Activated B cell treated with CpG ODN at 0.5 μM for 24 hours (primary cell): ENCODE measurements at regions of chr3 and their contacts with region 1.

Region 1: DNA sequence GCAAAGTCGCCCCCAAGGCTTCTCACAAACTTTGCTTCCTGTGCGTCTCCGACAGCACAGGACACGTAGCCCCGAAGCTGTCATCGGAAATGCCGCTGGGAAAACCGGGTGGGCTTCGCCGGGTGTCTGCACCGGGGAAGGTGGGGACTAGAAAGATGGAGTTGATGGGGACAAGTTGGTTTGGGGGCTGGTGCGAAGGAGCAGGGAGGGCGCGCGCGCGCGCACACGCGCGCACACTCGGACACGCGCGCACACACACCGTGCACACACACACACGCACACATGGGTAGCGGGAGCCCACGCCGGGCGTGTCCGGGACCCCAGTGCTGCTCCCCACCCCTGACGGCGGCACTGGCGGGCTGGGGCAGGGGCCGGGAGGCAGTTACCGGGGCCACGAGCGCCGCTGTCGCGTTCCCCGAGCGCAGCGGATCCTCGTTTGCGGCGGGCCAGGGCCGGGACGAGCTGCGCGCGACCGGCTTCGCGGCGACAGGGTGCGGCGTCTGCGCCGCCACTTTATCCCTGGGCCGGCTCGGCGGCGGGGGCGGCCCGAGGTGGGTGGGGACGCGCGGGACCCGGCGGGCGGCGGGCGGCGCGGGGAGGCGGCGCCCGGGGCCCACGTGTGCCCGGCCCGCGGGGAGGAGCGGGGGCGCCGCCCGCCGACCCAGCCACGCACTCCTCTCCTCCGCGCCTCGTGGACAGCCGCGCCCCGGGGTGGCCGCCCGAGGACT is 547 bp upstream of the MGLL start:
- DNase-seq: peak; percentile 39
- ATAC-seq: peak; percentile 72
- H3K4me3 Mint-ChIP-seq: peak overlapping the region; percentile 93
- H3K27ac Mint-ChIP-seq: peak overlapping the region; percentile 74
- H3K4me1 Mint-ChIP-seq: peaks cover 29% of the 10 kb centered on the region
- H3K27me3 Mint-ChIP-seq: peaks cover 14% of the 10 kb centered on the region
- CTCF ChIP-seq: no peak

Region 2: GRCh38 chr3:127735767-127736704 is 86.8 kb before region 1 on chr3:
- CTCF ChIA-PET with region 1: interaction called, 4 read pairs
- POLR2A ChIA-PET with region 1: interaction called, 10 read pairs
- intact Hi-C with region 1: no loop called
- DNase-seq: no peak
- ATAC-seq: peak; percentile 91
- H3K4me3 Mint-ChIP-seq: peak overlapping the region; percentile 77
- H3K27ac Mint-ChIP-seq: peak overlapping the region; percentile 93
- H3K4me1 Mint-ChIP-seq: peaks cover 46% of the 10 kb centered on the region
- H3K27me3 Mint-ChIP-seq: no peaks in the 10 kb centered on the region
- CTCF ChIP-seq: no peak